ENCODE measurements at regions of chr15 and their contacts with region 1.

Region 1: DNA sequence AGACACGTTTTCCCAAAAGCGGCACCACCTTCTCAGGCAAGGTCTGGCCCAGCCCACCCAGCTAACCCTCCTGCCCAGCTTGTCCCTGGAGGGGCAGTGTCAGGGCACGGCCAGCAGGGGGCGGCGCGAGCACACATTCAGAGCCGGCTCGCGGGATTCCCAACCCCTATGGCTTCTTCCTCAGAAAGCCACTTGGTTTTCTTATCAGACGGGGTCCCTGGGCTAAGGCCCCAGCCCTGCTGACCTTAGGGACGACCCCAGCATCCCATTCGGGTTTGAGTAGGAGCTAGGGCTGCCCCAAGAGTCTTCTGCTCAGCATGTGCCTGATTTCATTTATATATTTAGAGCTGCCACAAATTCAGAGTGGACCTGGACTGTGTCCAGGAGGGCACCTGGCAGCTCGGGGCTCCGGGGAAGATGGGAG is 14.5 kb downstream of the RLBP1 start:
- H3K4me3 ChIP-seq: no peak overlapping the region
- H3K27ac ChIP-seq: no peak overlapping the region
- H3K4me1 ChIP-seq: no peaks in the 10 kb centered on the region
- CTCF ChIP-seq: peak; percentile 74

Region 2: DNA sequence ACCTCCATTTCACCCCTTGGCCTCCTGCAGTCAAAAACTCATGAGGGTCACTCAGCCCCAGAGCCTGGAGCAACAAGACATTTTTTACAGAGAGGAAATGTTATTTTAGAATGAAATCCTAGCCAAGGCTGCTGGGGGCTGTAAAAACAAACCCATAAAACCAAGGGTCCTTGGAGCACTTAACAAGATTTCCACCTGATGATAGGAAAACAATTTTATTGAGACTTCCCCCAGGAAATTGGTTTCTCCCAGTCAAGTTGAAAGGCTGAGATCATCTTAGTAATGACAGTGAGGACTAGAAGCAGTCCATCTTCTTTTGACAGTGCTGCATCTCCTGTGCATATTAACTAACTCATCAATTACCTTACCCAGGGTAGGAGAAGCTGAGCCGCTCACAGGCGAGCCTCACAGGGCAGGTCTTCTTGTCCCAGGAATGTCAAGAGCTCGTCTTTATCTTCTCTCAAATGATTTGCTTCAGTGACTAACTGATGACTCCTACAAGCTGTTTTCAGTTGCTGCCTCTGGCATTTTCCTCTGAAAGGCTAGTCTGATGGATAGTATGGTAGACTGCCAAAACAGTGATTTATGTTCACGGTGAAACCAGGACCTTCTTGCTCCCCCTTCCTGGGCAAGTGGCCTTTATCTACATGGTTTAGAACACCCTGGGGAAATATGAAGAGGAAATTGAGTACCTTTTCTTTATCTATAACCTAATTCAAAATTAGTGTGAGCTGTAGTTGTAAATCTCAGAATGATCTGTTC is 620.3 kb before region 1 on chr15:
- CTCF ChIA-PET with region 1: no interaction called
- POLR2A ChIA-PET with region 1: no interaction called
- H3K4me3 ChIP-seq: no peak overlapping the region
- H3K27ac ChIP-seq: peak overlapping the region; percentile 65
- H3K4me1 ChIP-seq: peaks cover 18% of the 10 kb centered on the region
- CTCF ChIP-seq: no peak

Region 3: DNA sequence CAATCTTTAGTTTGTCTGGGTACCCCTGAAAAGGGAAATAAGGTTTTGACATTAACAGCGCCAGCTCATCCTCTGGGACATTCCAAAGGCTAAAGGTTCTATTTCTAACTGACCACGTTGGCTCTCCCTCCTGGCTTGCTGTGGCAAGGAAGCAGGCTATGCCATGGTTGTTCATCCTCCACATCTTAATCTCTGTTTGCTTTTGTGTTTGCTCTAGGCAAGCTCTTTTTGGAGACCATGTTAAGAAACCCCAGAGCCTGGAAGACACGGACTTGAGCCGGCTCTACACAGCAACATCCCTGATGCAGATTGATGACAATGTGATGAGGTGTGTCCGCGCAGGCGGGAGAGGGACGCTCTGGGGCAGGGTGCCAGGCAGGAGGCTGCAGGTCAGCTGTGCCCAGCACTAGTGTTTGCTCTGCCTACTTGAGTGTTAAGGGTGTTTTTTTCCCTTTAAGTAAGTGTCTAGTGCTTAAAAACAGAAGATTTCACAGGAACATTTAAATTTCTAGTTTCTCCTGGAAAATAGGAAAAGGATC is 18.9 kb before region 1 on chr15:
- CTCF ChIA-PET with region 1: interaction called, 19 read pairs
- POLR2A ChIA-PET with region 1: no interaction called
- H3K4me3 ChIP-seq: no peak overlapping the region
- H3K27ac ChIP-seq: no peak overlapping the region
- H3K4me1 ChIP-seq: no peaks in the 10 kb centered on the region
- CTCF ChIP-seq: no peak

Region 4: GRCh38 chr15:89230277-89230676 is 23.4 kb after region 1 on chr15:
- CTCF ChIA-PET with region 1: interaction called, 15 read pairs
- POLR2A ChIA-PET with region 1: no interaction called
- H3K4me3 ChIP-seq: no peak overlapping the region
- H3K27ac ChIP-seq: no peak overlapping the region
- H3K4me1 ChIP-seq: no peaks in the 10 kb centered on the region
- CTCF ChIP-seq: no peak

Region 5: DNA sequence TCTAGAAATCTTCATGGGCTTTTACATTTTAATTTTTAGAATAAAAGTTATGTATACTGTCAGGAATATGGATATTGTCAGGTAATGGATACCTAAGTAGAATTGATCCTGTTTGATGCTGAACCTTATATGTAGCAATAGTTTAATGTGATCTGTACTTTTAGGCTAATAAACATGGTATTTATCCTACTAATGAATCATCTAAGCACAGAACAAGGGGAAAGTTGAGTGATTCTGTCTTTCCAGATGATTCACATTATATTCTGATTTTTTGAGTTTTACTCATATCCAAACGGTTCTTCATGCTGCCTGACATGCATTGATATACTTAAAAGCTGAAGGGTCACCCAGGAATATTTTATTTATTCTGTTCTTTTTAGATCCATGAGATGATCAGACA is 71.4 kb after region 1 on chr15:
- CTCF ChIA-PET with region 1: interaction called, 15 read pairs
- POLR2A ChIA-PET with region 1: no interaction called
- H3K4me3 ChIP-seq: no peak overlapping the region
- H3K27ac ChIP-seq: no peak overlapping the region
- H3K4me1 ChIP-seq: no peaks in the 10 kb centered on the region
- CTCF ChIP-seq: no peak

Region 6: DNA sequence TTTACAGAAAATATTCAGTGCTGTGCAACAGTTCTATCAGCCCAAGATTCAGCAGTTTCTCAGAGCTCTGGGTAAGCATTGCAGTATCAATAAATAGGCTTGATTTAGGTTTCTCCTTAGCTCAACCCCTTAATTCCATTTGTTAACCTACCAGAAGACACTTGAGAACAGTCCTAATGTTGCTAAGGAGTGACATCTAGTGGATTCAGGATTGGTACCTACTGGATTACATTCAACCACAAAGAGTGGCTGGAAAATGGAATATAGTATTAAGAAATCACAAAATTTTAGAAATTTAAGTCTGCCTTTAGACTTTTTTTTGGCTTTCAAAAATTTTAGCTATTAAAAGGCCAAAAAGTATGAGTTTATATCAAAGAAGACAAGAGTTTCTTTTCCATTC is 93.0 kb after region 1 on chr15:
- CTCF ChIA-PET with region 1: interaction called, 11 read pairs
- POLR2A ChIA-PET with region 1: no interaction called
- H3K4me3 ChIP-seq: no peak overlapping the region
- H3K27ac ChIP-seq: no peak overlapping the region
- H3K4me1 ChIP-seq: no peaks in the 10 kb centered on the region
- CTCF ChIP-seq: no peak